Mammary epithelial cell (primary cell): ENCODE measurements at regions of chr17 and their contacts with region 1.

Region 1: DNA sequence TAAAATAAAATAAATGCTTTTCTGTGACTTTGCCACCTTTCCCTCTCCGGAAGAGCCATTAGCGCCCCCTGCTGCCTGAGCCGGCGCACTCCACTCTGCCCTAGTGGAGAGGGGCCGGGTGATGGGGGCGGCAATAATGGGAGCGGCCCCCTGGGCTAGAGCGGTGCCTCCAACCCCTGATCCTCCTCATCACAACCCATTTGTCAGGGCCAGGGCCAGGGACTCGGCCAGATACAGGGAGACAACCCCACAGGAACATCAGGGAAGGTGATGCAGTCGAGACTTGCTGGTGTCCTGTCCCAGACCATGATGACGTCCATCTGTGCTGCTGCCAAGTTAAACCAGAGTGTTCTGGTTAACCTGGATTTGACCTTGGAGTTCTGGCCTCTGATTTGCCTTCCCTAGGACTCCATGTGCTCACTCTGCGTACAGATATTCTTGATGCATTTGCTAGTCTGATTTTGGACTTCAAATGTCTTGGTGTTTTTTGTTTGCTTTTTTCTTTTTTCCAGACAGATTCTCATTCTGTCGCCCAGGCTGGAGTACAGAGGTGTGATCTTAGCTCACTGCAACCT is 46.1 kb upstream of the BPTF start:
- DNase-seq: peak; percentile 14
- H3K4me3 ChIP-seq: no peak overlapping the region
- H3K27ac ChIP-seq: no peak overlapping the region
- H3K4me1 ChIP-seq: no peaks in the 10 kb centered on the region
- H3K27me3 ChIP-seq: no peaks in the 10 kb centered on the region
- CTCF ChIP-seq: peak; percentile 57 to 69

Region 2: GRCh38 chr17:67637917-67638641 is 141.1 kb before region 1 on chr17:
- CTCF ChIA-PET with region 1: interaction called, 12 read pairs
- dilution Hi-C with region 1: no loop called
- in situ Hi-C with region 1: no loop called
- intact Hi-C with region 1: no loop called
- DNase-seq: peak; percentile 99
- H3K4me3 ChIP-seq: no peak overlapping the region
- H3K27ac ChIP-seq: peak overlapping the region; percentile 32
- H3K4me1 ChIP-seq: peaks cover 26% of the 10 kb centered on the region
- H3K27me3 ChIP-seq: no peaks in the 10 kb centered on the region
- CTCF ChIP-seq: no peak

Region 3: DNA sequence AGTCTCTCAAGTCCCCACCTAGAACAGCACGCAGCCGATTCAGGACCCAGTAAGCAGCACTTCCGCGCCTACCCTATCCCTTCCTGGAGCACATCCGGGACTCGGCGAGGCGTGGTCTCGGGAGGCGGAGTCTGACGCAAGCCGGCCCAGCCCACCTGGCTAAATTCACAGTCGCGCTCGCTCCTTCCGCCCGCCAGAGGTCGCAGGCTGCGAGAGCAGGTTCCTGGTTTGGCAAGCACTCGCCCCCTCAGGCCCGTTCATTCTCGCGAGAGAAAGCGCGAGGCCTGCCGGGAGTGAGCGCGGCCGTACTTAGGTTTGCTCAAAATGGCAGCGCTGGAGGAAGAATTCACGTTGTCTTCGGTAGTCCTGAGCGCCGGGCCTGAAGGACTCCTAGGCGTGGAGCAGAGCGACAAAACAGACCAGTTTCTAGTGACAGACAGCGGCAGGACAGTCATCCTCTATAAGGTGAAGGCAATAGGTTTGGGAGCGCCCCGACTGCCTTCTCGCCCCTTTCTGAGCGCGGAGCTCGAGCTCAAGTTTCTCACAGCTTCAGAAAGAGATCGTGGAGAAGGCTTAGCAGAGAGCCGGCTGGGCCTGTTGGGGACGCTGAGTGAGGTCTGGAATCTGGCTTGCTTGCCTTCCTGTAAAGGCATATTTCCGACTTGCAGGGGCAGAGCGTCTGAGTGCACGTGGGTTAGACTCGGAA is 61.4 kb before region 1 on chr17 and contains the start of gene NOL11:
- CTCF ChIA-PET with region 1: no interaction called
- dilution Hi-C with region 1: no loop called
- in situ Hi-C with region 1: no loop called
- intact Hi-C with region 1: loop called (anchors 1 kb)
- DNase-seq: peak; percentile 97
- H3K4me3 ChIP-seq: peak within 1 kb of the TSS; percentile 81 to 90 (median 81)
- H3K27ac ChIP-seq: peak within 1 kb of the TSS; percentile 85
- H3K4me1 ChIP-seq: peaks cover 16% of the 10 kb centered on the region
- H3K27me3 ChIP-seq: no peaks in the 10 kb centered on the region
- CTCF ChIP-seq: peak; percentile 81 to 98
- total RNA-seq, gene NOL11: 36.5 to 40.6 TPM

Region 4: DNA sequence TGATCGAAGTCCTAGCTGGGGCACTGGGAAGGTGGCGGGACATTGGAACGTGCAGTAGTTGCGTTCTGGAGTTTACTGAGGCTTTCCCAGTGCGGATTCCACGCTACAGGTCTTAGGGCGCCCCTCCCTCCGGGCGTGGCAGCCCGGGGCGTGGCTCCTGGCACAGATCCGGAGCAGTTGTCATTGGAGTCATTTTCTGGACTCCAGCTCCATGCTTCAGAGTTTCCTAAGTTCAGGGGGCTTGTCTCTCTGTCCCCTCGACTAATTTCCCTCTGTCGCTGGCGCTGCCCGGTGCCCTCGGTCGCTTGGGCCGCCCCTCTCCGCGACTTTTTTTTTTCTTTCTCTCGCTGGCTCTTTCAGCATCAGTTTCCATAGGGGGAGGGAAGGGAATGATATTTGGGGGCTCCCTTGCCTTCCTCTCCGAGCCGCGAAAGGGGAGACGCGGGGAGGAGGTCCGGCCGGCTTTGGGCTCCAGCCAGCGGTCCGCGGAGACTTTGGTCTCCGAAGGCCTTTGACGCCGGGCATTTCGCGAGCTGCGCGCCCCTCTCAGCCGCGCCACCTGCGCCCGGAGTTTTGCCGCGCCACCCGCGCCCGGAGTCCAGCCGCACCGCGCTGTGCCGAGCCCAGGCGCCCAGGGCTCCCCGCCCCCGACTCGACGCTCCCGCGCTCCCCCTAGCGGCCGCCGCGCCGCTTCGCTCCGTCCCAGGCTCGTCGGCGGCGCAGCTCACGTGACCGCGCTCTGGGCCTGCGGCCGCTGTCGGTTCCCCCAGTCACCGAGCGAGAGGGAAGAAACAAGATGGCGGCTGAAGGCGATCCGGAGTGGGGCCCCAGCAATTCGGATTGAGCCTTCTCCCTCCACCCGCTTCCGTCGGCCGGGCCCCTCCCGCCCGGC is 45.8 kb after region 1 on chr17 and contains the start of gene BPTF:
- CTCF ChIA-PET with region 1: no interaction called
- dilution Hi-C with region 1: no loop called
- in situ Hi-C with region 1: no loop called
- intact Hi-C with region 1: no loop called
- DNase-seq: peak; percentile 86
- H3K4me3 ChIP-seq: peak within 1 kb of the TSS; percentile 90
- H3K27ac ChIP-seq: peak within 1 kb of the TSS; percentile 54
- H3K4me1 ChIP-seq: peaks cover 7% of the 10 kb centered on the region
- H3K27me3 ChIP-seq: no peaks in the 10 kb centered on the region
- CTCF ChIP-seq: peak; percentile 71 to 84
- total RNA-seq, gene BPTF: 54.1 to 54.3 TPM